ENCODE measurements at regions of chr11 and their contacts with region 1.

Region 1: DNA sequence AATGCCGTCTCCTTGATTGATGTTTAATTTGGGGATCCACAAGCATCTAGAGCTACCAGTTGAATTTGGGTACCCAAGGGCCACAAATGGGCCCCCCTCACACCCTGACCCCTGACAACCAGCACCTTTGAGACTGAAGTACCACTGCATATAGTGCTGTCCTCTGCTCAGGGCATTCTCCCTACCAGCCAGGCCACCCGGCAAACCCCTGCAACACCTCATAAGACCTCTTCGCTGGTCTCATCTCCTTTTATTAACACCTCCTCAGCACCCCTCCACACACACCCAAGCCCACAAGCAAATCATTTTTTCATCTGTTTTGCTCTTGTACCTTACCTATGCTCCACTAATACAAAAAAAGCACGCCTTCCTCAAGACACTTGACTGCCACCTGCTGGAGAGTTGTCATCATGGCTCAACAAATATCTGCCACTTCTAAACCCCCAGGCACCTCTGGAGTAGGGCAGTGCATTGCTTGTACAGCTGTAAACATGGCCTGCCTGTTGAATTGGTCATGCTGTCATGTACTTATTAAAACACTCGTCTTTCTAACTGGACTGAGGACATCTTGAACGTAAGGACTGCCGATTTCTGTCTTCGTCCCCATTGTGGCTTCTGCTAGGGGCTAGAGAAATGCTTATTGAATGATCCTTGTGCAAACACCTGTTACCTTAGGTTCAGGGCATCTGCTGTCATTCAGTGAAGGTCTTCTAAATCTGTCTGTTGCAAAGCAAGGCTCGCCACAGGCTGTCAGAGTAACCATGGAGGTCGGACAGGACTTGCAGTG is 66.5 kb downstream of the BMAL1 start:
- DNase-seq: peak; percentile 60
- H3K4me3 Mint-ChIP-seq: no peak overlapping the region
- H3K27ac Mint-ChIP-seq: no peak overlapping the region
- H3K4me1 Mint-ChIP-seq: peaks cover 17% of the 10 kb centered on the region
- H3K27me3 Mint-ChIP-seq: no peaks in the 10 kb centered on the region

Region 2: DNA sequence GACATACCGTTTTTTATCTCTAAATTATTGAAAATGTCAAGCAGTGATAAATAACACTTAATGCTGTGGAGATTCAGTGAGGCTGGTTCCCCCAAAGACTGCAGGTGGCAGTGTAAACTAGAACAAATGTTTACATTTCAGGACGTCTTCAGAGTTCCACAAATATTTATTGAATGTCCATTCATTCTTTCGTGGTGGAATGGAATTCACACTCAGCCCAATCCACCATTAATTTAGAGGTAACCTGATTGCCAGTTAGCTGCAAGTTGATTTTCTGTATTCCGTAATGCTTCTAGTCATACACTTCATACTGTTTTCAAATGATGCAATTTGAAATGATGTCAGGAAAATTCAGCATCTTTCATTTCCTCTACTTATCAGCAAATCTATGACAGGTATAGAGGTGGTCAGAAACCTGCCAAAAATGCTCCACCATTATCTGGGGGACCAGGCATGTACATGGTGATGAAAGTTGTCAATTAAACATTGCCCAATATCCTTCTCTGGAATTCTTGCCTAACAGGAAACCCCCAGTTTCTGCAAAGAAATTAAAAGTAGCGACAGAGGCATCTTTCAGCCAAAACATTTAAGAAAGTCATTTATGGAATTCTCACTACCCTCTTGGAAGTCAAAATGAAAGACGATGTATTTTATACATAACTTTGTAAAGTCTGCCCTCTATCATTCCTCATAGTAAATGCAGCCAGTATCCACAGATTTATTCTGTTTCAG is 160.9 kb before region 1 on chr11:
- intact Hi-C with region 1: loop called (anchors 2 kb)
- DNase-seq: no peak
- H3K4me3 Mint-ChIP-seq: no peak overlapping the region
- H3K27ac Mint-ChIP-seq: no peak overlapping the region
- H3K4me1 Mint-ChIP-seq: peaks cover 6% of the 10 kb centered on the region
- H3K27me3 Mint-ChIP-seq: peaks cover 9% of the 10 kb centered on the region

Region 3: GRCh38 chr11:13238879-13239514 is 105.1 kb before region 1 on chr11:
- intact Hi-C with region 1: loop called (anchors 1 kb)
- DNase-seq: peak; percentile 14
- H3K4me3 Mint-ChIP-seq: no peak overlapping the region
- H3K27ac Mint-ChIP-seq: no peak overlapping the region
- H3K4me1 Mint-ChIP-seq: peaks cover 2% of the 10 kb centered on the region
- H3K27me3 Mint-ChIP-seq: peaks cover 37% of the 10 kb centered on the region